Astrocyte of the cerebellum (primary cell): ENCODE measurements at regions of chr2 and their contacts with region 1.

Region 1: GRCh38 chr2:111128096-111128495 is 7.4 kb downstream of the BCL2L11 start:
- DNase-seq: no peak
- H3K4me3 ChIP-seq: no peak overlapping the region
- CTCF ChIP-seq: no peak

Region 2: DNA sequence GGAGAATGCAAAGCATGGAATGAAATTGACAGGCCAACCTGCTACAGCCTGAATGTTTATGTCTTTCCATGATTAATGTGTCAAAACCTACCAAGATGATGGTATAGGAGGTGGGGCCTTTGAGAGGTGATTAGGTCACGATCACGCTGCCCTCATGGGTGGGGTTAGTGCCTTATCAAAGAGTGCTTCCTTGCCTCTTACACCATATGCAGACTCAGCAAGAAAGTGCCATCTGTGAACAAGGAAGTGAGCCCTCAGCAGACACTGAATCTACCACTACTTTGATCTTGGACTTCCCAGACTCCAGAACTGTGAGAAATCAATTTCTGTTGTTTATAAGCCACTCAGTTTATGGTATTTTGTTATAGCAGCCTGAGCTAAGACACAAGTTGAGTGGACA is 154.8 kb before region 1 on chr2:
- in situ Hi-C with region 1: no loop called
- DNase-seq: no peak
- H3K4me3 ChIP-seq: no peak overlapping the region
- CTCF ChIP-seq: no peak

Region 3: DNA sequence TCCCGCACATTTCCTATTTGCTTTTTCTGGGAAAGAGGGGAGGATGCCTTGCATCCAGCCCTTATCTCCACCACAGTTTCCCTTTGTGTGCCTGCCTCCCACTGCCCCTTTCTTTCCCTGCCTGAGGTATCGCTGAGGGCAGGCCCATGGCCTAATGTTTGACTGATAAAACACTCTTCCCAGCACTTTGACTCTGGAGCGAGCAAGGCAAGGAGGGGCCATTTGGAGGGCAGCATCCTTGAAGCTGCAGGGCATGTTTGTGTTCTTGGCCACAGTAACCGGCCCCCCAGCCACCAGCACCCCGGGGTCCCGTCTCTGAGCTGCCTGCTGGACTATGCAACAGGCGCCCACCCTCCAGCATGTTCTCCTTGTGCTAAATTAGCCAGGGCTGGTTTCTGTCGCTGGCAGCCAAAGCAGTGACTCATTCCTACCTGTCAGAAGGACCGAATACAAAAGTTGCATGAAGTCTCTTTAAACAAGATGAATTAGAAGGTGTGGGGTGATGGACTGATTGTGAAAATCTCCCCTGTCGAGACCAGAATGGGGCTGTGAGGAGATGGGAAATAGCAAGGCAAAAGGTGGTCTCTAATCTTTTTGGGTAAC is 43.3 kb after region 1 on chr2:
- in situ Hi-C with region 1: loop called (anchors 5 kb)
- DNase-seq: no peak
- H3K4me3 ChIP-seq: no peak overlapping the region
- CTCF ChIP-seq: no peak

Region 4: GRCh38 chr2:111698743-111699554 is 570.9 kb after region 1 on chr2:
- in situ Hi-C with region 1: loop called (anchors 5 kb)
- DNase-seq: peak; percentile 99
- H3K4me3 ChIP-seq: no peak overlapping the region
- CTCF ChIP-seq: peak; percentile 62